ENCODE measurements at regions of chr19 and their contacts with region 1.

Region 1: GRCh38 chr19:51026554-51026831 is at the start of gene KLK11:
- DNase-seq: no peak
- ATAC-seq: peak in 1 of 4 donors; percentile 37
- H3K4me3 ChIP-seq: peak within 1 kb of the TSS in 3 of 12 donors; percentile 10 to 25 (median 10)
- H3K27ac ChIP-seq: no peak within 1 kb of the TSS
- H3K4me1 ChIP-seq: peaks cover 0 to 6% (median 0%) of the 10 kb centered on the region in 12 donors
- H3K27me3 ChIP-seq: peaks cover 0 to 61% (median 16%) of the 10 kb centered on the region in 9 donors
- CTCF ChIP-seq: no peak
- POLR2A ChIP-seq: no peak
- total RNA-seq, gene KLK11: 0.32 to 19.1 TPM in 2 of 9 donors, not detected in the others

Region 2: DNA sequence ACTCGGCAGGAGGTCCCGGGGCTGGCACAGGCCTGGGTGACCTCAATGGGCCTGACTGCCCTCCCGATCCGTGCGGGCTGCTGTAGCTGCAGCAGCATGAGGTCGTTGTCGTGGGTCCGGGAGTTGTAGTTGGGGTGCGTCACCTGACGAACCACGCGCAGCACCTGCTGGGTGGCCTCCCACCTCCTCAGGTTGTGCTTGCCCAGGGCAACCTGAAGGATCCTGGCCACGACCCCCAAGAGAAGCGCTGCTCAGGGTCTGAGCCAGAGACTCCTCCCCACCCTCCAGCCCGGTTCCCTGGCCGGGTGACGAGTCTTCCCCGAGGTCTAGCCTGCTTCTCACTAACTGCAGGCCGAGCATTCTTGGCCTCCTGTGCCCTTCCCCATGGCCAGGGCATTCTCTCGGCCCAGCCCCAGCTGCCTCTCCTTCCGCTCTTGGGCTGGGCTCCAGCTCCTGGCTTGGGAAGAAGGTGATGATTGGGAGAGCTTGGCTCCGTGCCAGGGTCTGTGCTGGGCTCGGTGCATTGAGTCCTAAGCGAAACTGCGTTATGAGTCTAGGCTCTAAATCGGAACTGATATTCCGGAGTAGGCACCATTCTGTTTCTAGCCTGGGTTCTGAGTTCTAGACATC is 53.1 kb after region 1 on chr19:
- intact Hi-C with region 1: loop called in 1 of 10 experiments (anchors 5 kb)
- DNase-seq: peak; percentile 40 to 89 (median 83)
- ATAC-seq: peak; percentile 26 to 91 (median 84)
- H3K4me3 ChIP-seq: no peak overlapping the region
- H3K27ac ChIP-seq: no peak overlapping the region
- H3K4me1 ChIP-seq: peaks cover 0 to 8% (median 4%) of the 10 kb centered on the region in 12 donors
- H3K27me3 ChIP-seq: no peaks in the 10 kb centered on the region
- CTCF ChIP-seq: no peak
- POLR2A ChIP-seq: no peak

Region 3: GRCh38 chr19:51097166-51097738 is 70.8 kb after region 1 on chr19:
- intact Hi-C with region 1: loop called in 7 of 10 experiments (anchors 1 to 5 kb)
- DNase-seq: peak; percentile 45 to 88 (median 63)
- ATAC-seq: peak in 3 of 4 donors; percentile 44 to 62 (median 52)
- H3K4me3 ChIP-seq: no peak overlapping the region
- H3K27ac ChIP-seq: no peak overlapping the region
- H3K4me1 ChIP-seq: peaks cover 0 to 27% (median 3%) of the 10 kb centered on the region in 12 donors
- H3K27me3 ChIP-seq: no peaks in the 10 kb centered on the region
- CTCF ChIP-seq: peak; percentile 42 to 66 (median 56)
- POLR2A ChIP-seq: no peak